ENCODE measurements at regions of chr10 and their contacts with region 1.

Region 1: DNA sequence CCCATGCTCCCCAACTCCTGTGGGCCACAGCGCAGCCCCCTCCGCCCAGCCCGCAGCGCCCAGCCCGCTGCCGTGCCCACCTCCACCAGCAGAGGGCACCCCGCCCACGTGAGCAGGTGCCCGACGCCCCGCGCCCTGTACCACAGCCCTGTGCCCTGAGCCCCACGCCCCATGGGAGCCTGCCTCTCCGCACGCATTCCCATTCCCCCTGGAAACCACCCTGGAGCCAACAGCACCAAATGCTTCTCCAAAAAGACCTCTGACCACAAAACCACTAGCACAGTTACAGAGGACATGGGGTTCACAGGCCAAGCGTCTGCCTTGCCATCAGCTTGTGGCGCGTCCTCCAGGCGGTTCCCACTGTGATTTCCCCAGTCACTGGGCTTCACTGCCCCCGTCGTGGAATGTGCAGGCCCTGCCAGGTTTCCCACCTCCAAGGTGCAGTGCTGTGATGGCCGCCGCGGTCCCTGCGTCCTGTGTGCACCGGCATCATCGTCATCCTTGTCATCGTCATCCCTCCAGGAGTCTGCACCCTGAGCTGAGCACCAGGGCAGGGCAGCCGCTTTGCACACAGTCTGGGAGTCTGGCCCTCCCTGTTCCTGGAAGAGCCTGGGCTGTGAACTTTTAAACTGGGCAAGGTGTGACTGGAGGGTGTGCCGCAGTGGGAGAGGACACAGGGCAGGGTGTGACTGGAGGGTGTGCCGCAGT is 61.7 kb downstream of the PWWP2B start:
- DNase-seq: peak; percentile 62
- ATAC-seq: peak; percentile 80
- H3K4me3 Mint-ChIP-seq: no peak overlapping the region
- H3K27ac Mint-ChIP-seq: no peak overlapping the region
- H3K4me1 Mint-ChIP-seq: peaks cover 2% of the 10 kb centered on the region
- H3K27me3 Mint-ChIP-seq: no peaks in the 10 kb centered on the region

Region 2: DNA sequence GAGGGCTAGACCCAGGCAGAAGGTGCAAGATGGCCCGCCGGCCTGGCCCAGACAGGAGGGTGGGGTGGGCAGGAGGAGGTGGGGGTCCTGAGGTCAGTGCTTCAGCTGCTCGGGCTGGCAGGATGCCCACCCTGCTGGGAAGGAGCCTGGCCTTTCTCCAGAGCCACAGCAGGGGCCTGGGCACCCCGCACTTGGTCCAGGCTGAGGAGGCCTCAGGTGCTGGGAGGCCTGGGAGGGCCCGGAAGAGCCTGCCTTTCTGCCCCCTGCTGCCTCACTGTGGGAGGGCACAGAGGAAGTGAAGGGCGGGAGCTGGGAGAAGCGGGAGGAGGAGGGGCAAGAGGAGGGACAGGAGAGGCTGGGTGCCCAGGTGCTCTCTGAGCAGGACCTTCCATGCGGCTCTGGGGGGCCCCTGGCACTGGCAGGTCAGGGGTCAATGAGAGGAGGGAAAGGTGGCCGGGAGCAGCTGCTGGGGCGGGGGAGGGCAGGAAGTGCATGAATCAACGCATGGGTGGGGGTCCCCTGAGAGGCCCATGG is 12.0 kb before region 1 on chr10:
- CTCF ChIA-PET with region 1: interaction called, 11 read pairs
- DNase-seq: peak; percentile 91
- ATAC-seq: peak; percentile 68
- H3K4me3 Mint-ChIP-seq: peak overlapping the region; percentile 59
- H3K27ac Mint-ChIP-seq: peak overlapping the region; percentile 92
- H3K4me1 Mint-ChIP-seq: peaks cover 36% of the 10 kb centered on the region
- H3K27me3 Mint-ChIP-seq: no peaks in the 10 kb centered on the region

Region 3: GRCh38 chr10:132551093-132551807 is 92.5 kb after region 1 on chr10:
- CTCF ChIA-PET with region 1: interaction called, 10 read pairs
- DNase-seq: peak; percentile 67
- ATAC-seq: peak; percentile 83
- H3K4me3 Mint-ChIP-seq: peak overlapping the region; percentile 52
- H3K27ac Mint-ChIP-seq: peak overlapping the region; percentile 82
- H3K4me1 Mint-ChIP-seq: peaks cover 21% of the 10 kb centered on the region
- H3K27me3 Mint-ChIP-seq: no peaks in the 10 kb centered on the region